ENCODE measurements at regions of chr7 and their contacts with region 1.

Region 1: DNA sequence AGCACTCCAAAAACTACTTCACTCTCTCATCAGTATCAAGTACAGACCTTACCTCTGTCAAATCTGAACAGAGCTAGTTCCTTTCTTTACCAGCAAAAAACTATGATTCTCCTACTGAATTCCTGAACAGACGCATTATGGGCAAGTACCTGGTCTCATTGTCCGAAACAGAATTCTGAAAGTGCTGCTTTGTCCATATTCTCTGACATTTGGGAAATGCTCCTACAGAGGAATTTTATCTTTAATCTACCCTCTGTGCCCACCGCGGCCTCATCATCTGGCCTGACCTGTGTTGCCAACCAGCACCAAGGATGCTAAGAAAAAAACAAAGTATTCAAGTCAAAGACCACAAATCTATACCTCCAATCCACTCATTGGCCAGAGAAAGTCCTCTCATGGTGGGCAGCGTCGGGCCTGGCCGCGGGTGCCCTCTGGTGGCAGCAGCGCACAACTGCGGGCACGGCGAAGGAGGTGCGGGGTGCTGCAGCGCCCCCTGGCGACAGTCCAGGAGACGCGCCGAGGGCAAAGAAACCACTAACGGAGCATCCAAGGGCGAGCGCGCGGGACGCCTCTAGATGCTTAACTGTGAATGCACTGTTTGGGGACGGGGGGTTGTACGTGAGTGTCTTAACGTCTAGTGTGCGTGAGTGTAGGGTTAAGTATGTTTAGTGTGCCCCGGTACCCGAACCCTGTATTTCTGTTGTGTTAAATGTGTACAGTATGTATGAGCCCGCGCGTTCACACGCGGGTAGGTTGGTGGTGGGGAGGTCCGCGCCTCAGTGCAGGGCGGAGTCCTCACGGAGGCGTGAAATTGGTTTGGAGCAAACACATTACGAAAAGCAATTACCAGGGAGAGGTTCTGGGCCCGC is 5.0 kb upstream of the GBX1 start:
- DNase-seq: peak; percentile 65 to 97 (median 83)
- ATAC-seq: peak; percentile 98
- H3K4me3 ChIP-seq: no peak overlapping the region
- H3K27ac ChIP-seq: no peak overlapping the region
- H3K4me1 ChIP-seq: peaks cover 4 to 9% of the 10 kb centered on the region in 2 donors
- H3K27me3 ChIP-seq: peaks cover 23 to 96% of the 10 kb centered on the region in 2 donors
- CTCF ChIP-seq: peak; percentile 100

Region 2: DNA sequence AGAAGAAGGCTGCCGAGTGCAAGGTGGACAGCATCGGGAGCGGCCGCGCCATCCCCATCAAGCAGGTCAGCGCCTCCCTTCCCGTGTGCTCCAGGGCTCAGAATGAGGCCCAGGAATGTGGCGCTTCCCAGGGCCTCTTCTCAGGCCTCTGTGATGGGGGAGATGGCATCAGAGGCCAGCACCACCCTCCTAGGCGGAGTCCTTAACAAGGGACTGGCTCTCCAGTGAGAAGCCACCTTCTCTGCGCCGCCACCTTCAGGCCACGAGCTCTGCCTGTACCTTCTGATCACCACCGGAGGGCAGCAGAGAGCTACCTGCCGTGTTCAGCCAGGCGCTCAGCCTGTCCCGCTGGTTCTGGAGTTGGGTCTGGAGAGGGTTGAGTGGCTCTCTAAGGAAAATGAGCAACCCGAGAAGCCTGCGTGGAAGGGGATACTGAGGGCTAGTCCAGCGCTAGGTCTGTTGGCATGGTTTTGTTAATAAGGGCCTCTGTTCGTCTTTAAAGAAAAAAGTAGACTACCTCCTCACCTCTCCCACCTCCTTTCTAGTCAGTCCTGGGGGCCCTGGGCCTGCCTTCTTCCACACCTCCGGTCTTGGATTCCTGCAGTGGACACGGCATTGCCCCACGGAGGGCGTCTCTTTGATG is 48.6 kb before region 1 on chr7:
- intact Hi-C with region 1: loop called in 1 of 2 experiments (anchors 5 kb)
- DNase-seq: peak; percentile 75 to 93 (median 90)
- ATAC-seq: peak; percentile 95
- H3K4me3 ChIP-seq: no peak overlapping the region
- H3K27ac ChIP-seq: no peak overlapping the region
- H3K4me1 ChIP-seq: peaks cover 10 to 14% of the 10 kb centered on the region in 2 donors
- H3K27me3 ChIP-seq: no peaks in the 10 kb centered on the region
- CTCF ChIP-seq: peak; percentile 96

Measured in left lung (tissue), 14 donors.